ENCODE measurements at regions of chr20 and their contacts with region 1.

Region 1: GRCh38 chr20:53660078-53660909 is 66.7 kb upstream of the ZNF217 start:
- DNase-seq: peak; percentile 69
- ATAC-seq: peak; percentile 51
- H3K4me3 Mint-ChIP-seq: peak overlapping the region; percentile 88
- H3K27ac Mint-ChIP-seq: peak overlapping the region; percentile 96
- H3K4me1 Mint-ChIP-seq: peaks cover 57% of the 10 kb centered on the region
- H3K27me3 Mint-ChIP-seq: no peaks in the 10 kb centered on the region

Region 2: DNA sequence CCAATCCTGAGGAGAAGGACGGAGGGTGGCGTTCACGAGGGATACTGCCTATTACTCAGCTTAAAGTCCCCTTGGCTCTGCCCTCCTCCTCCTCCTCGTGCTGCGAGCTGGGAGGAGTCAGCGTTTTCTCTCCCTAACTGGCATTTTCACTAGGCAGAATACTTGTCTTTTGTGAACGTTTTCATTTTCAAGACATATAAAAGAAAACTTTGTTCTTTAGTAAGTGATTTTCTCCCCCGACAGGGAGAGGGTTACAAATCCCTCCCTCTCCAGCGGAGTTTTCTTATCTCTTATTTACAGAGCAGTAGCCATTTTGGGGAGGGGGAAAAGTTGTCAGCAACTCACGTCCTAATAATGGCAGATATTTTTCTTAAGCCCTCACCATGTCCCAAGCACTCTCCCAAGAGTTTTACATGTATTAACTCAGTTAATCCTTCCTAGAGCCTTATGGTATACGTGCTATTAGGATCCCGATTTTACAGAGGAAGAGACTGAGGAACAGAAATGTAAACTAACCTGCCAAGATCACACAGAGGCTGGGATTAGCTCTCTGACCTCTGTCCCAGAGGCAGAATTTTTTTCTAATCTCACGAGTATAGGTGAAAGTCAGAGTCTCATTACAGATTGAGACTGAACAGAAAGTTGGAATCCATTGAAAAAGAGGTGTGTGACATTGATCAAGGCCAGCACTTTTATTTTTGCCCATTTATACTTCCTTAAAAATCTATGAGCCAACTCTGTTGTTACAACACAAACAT is 36.7 kb before region 1 on chr20:
- POLR2A ChIA-PET with region 1: interaction called, 13 read pairs
- DNase-seq: no peak
- ATAC-seq: peak; percentile 55
- H3K4me3 Mint-ChIP-seq: peak overlapping the region; percentile 80
- H3K27ac Mint-ChIP-seq: peak overlapping the region; percentile 98
- H3K4me1 Mint-ChIP-seq: peaks cover 41% of the 10 kb centered on the region
- H3K27me3 Mint-ChIP-seq: no peaks in the 10 kb centered on the region

Region 3: GRCh38 chr20:53643031-53643832 is 17.1 kb before region 1 on chr20:
- POLR2A ChIA-PET with region 1: interaction called, 13 read pairs
- DNase-seq: peak; percentile 60
- ATAC-seq: peak; percentile 96
- H3K4me3 Mint-ChIP-seq: peak overlapping the region; percentile 75
- H3K27ac Mint-ChIP-seq: peak overlapping the region; percentile 96
- H3K4me1 Mint-ChIP-seq: peaks cover 43% of the 10 kb centered on the region
- H3K27me3 Mint-ChIP-seq: no peaks in the 10 kb centered on the region

Region 4: DNA sequence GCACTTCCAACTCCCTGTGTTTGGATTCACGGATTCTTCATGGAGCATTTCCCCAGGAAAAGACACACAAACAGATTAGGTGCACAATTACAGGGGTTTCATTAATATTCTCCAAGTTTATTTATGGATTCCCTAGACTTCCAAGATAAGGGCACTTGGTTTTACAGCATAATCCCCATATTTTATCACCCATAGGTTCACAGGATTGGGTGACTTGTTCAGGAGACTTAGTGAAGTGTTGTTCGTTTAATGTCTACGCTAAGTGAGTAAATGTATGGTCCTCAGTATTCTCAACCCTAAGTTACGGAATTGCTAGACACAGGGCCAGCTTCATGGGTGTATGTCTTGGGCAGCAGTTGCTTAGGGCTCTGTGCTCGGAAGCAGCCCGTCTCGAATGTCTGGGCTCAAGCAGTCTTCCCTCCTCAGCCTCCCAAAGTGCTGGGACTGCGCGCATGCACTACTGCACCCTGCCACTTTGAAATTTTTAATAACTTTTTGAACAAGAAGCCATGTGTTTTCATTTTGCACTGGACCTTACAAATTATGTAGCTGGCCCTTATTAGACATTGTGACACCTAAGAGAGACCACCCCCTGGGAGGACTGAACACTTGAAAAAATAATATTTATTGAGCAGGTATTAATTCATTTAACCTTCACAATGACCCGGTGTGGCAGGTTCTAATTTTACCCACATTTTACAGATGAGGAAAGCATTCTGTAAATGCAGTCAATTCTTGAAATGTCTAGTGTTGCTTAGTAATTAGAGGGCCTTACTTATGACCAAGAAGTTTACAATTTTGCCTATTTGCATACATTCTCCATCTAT is 24.9 kb after region 1 on chr20:
- POLR2A ChIA-PET with region 1: interaction called, 20 read pairs
- DNase-seq: no peak
- ATAC-seq: no peak
- H3K4me3 Mint-ChIP-seq: peak overlapping the region; percentile 70
- H3K27ac Mint-ChIP-seq: peak overlapping the region; percentile 96
- H3K4me1 Mint-ChIP-seq: peaks cover 33% of the 10 kb centered on the region
- H3K27me3 Mint-ChIP-seq: no peaks in the 10 kb centered on the region

Region 5: DNA sequence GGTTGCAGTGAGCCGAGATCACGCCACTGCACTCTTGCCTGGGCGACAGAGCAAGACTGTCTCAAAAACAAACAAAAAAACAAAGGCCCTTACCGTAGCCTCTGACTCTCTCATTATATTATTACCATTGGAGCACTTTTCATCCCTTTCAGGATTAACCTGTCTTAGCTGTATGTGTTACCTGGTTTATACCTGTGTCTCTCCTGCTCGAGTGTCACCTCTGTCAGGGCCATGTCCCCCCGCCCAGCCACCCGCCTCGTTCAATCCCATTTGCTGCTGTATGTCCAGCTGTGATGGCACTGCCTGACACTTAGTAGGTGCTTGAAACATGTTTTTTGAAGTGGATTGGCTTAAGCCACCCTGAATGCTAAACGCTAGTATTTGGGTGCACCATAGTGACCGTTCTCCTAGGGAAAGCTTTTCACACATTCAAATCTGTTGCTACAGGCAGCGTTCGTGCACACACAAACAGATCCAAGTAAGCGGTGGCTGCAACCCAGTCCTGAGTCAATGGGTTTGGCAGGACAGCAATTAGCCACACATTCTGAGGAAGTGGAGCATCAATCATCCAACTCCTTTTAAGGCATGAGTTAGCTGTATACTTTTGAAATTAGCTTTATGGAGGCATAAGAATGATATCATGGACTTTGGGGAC is 32.2 kb after region 1 on chr20:
- POLR2A ChIA-PET with region 1: interaction called, 10 read pairs
- DNase-seq: no peak
- ATAC-seq: peak; percentile 34
- H3K4me3 Mint-ChIP-seq: peak overlapping the region; percentile 76
- H3K27ac Mint-ChIP-seq: peak overlapping the region; percentile 90
- H3K4me1 Mint-ChIP-seq: peaks cover 43% of the 10 kb centered on the region
- H3K27me3 Mint-ChIP-seq: no peaks in the 10 kb centered on the region

Region 6: DNA sequence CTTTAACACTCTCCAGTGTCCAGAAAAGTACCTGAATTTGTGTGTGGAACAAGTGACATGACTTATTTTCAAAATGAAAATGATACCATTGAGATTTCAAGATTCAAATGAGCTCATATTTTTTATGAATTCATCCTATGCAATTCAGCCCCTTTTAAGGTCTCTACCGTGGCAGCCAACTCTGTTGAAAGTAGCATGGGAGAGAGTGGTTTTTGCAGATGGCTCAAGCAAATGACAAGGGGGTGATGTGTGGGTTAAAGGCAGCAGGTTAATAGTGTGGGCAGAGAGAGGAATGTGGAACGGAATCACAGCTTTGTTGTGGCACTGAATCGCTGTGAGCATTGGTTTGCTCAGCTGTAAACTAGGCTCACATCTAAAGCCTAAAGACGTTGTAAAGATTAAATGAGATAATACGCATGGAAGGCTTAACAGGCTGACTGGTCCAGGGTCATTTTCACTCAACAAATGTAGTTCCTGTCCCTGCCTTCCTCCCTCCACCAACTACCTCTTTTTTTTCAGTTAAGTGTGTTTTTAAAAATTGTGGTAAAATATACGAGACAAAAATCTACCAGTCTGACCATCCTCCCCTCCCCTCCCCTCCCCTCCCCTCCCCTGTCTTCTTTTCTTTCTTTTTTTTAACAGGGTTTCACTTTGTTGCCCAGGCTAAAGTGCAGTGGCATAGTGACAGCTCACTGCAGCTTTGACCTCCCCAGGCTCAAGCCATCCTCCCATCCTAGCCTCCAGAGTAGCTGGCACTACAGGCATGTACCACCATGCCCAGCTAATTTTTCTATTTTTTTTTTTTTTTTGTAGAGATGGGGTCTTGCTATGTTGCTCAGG is 48.1 kb after region 1 on chr20:
- POLR2A ChIA-PET with region 1: interaction called, 10 read pairs
- DNase-seq: no peak
- ATAC-seq: peak; percentile 60
- H3K4me3 Mint-ChIP-seq: peak overlapping the region; percentile 82
- H3K27ac Mint-ChIP-seq: peak overlapping the region; percentile 94
- H3K4me1 Mint-ChIP-seq: peaks cover 50% of the 10 kb centered on the region
- H3K27me3 Mint-ChIP-seq: no peaks in the 10 kb centered on the region

Region 7: DNA sequence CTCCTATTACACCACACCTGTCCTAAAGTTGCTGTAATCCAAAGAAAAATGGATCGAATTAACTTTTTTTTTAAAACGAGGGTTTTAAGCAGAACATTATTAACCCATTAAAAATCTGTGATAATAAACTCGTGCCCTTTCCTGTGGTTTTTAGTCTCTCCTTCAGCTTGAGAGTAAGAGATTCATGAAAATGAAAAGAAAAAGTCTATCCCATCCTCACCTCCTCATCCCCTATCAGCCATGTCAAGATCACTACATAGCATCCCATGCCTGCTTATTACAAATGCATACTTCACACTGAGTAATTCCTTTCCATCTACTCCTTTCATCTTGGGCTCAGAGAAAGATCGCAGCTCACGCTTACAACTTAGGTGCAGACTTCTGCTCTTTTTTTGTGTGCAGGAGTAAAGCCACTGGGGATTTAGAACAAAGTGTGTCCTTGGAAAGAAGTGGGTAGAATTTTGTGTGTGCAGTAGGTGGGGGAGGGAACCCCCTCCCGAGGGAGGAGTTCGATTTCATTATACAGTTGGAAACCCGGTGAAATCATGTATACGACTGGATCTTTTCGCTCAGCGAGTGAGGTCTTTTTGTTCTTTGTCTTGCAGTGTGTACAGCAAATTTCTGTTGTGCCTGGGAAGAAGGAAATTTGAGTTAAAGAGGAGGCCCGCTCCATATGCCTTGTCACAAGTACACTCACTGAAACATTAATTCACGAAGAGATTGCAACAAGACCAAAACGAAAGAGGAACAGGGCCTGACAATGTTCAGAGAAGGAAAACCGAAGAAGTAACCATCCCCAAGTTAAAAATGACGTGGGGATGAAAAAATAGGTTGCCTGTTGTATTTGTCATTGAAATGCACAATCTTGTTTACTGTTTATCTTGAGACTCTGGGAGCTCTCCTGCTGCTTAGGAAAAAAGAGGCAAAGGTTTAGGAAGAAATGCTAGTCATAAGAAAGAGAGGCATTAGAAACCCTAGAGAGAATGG is 79.8 kb after region 1 on chr20:
- POLR2A ChIA-PET with region 1: no interaction called
- DNase-seq: no peak
- ATAC-seq: peak; percentile 62
- H3K4me3 Mint-ChIP-seq: peak overlapping the region; percentile 79
- H3K27ac Mint-ChIP-seq: peak overlapping the region; percentile 88
- H3K4me1 Mint-ChIP-seq: peaks cover 48% of the 10 kb centered on the region
- H3K27me3 Mint-ChIP-seq: no peaks in the 10 kb centered on the region

Region 8: DNA sequence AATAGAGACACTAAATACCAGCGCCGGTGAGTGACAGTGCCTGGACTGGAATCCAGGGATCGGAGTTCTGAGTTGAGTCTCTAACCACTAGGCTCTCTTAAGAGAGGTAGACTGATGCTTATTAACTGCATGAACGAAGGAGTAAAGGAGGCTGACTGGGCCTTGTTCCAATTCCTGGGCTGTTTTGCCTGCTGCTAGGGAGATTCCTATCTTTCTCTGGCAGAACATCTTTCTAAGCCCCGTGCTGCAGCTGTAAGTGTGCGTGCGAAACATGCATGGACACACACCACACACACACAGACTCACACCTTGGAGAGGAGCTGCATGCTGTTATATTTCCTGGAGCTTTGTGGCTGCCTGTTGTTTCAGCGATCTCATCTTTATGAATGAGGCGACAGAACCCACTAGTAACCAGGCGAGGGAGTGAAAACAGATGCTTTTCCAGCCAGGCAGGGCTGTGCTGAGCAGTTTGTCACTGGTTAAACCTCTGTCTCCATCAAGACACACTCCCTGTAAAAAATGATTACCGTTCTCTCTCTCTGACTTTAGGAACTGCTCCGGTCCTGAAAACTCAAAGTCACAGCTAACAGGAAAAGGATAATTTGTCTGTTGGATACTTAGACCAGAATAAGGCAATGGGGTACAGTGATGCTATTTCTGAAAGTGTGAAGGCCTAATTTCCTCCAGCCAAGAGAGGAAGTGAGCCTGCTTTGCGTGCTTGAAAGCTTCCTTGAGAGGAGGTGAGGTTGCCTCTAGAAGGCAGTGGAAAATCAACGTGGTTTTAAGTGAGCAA is 90.7 kb after region 1 on chr20:
- POLR2A ChIA-PET with region 1: interaction called, 11 read pairs
- DNase-seq: peak; percentile 58
- ATAC-seq: peak; percentile 66
- H3K4me3 Mint-ChIP-seq: peak overlapping the region; percentile 68
- H3K27ac Mint-ChIP-seq: peak overlapping the region; percentile 97
- H3K4me1 Mint-ChIP-seq: peaks cover 61% of the 10 kb centered on the region
- H3K27me3 Mint-ChIP-seq: no peaks in the 10 kb centered on the region